A673 (cell line): ENCODE measurements at regions of chr7 and their contacts with region 1.

Region 1: GRCh38 chr7:80699045-80699638 is 60.7 kb downstream of the CD36 start:
- DNase-seq: peak; percentile 76
- H3K4me3 ChIP-seq: no peak overlapping the region
- H3K27ac ChIP-seq: no peak overlapping the region
- H3K4me1 ChIP-seq: no peaks in the 10 kb centered on the region
- H3K27me3 ChIP-seq: no peaks in the 10 kb centered on the region
- CTCF ChIP-seq: peak; percentile 65

Region 2: GRCh38 chr7:80453699-80454340 is 245.3 kb before region 1 on chr7:
- CTCF ChIA-PET with region 1: no interaction called
- POLR2A ChIA-PET with region 1: no interaction called
- intact Hi-C with region 1: no loop called
- DNase-seq: peak; percentile 58
- H3K4me3 ChIP-seq: no peak overlapping the region
- H3K27ac ChIP-seq: no peak overlapping the region
- H3K4me1 ChIP-seq: no peaks in the 10 kb centered on the region
- H3K27me3 ChIP-seq: no peaks in the 10 kb centered on the region
- CTCF ChIP-seq: peak; percentile 70

Region 3: GRCh38 chr7:81232084-81232799 is 533.1 kb after region 1 on chr7:
- CTCF ChIA-PET with region 1: no interaction called
- POLR2A ChIA-PET with region 1: no interaction called
- intact Hi-C with region 1: loop called (anchors 5 kb)
- DNase-seq: no peak
- H3K4me3 ChIP-seq: no peak overlapping the region
- H3K27ac ChIP-seq: no peak overlapping the region
- H3K4me1 ChIP-seq: peaks cover 51% of the 10 kb centered on the region
- H3K27me3 ChIP-seq: no peaks in the 10 kb centered on the region
- CTCF ChIP-seq: no peak

Region 4: GRCh38 chr7:81256991-81257390 is 557.8 kb after region 1 on chr7:
- CTCF ChIA-PET with region 1: no interaction called
- POLR2A ChIA-PET with region 1: no interaction called
- intact Hi-C with region 1: loop called (anchors 5 kb)
- DNase-seq: peak; percentile 56
- H3K4me3 ChIP-seq: no peak overlapping the region
- H3K27ac ChIP-seq: no peak overlapping the region
- H3K4me1 ChIP-seq: no peaks in the 10 kb centered on the region
- H3K27me3 ChIP-seq: no peaks in the 10 kb centered on the region
- CTCF ChIP-seq: peak; percentile 55

Region 5: GRCh38 chr7:81457852-81458522 is 758.8 kb after region 1 on chr7:
- CTCF ChIA-PET with region 1: no interaction called
- POLR2A ChIA-PET with region 1: no interaction called
- intact Hi-C with region 1: loop called (anchors 5 kb)
- DNase-seq: peak; percentile 63
- H3K4me3 ChIP-seq: no peak overlapping the region
- H3K27ac ChIP-seq: no peak overlapping the region
- H3K4me1 ChIP-seq: no peaks in the 10 kb centered on the region
- H3K27me3 ChIP-seq: no peaks in the 10 kb centered on the region
- CTCF ChIP-seq: peak; percentile 50; the same call in 1 of the 2 replicates

Region 6: GRCh38 chr7:81469869-81470723 is 771.0 kb after region 1 on chr7:
- CTCF ChIA-PET with region 1: no interaction called
- POLR2A ChIA-PET with region 1: no interaction called
- intact Hi-C with region 1: loop called (anchors 5 kb)
- DNase-seq: peak; percentile 80
- H3K4me3 ChIP-seq: no peak overlapping the region
- H3K27ac ChIP-seq: no peak overlapping the region
- H3K4me1 ChIP-seq: no peaks in the 10 kb centered on the region
- H3K27me3 ChIP-seq: no peaks in the 10 kb centered on the region
- CTCF ChIP-seq: peak; percentile 78